ENCODE measurements at regions of chr5 and their contacts with region 1.

Region 1: DNA sequence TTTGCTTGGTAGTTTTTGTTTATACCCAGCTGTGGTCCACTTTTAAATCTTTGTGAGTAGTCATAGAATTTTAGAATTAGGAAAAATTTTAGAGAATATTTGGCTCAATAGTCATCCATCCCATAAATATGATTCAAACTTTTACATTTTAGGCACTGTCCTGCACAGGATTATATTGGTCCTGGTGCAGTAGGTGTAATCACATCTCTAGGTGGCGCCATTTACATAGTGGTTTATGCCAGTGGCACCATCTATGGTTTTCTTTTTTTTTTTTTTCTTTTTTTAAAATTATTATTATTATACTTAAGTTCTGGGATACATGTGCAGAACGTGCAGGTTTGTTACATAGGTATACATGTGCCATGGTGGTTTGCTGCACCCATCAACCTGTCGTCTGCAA is 260.7 kb upstream of the KCNN2 start:
- DNase-seq: peak in 1 of 2 donors; percentile 45
- ATAC-seq: peak in 2 of 8 donors; percentile 49 to 64
- H3K4me3 ChIP-seq: no peak overlapping the region
- H3K27ac ChIP-seq: no peak overlapping the region
- H3K4me1 ChIP-seq: no peaks in the 10 kb centered on the region
- H3K27me3 ChIP-seq: no peaks in the 10 kb centered on the region
- CTCF ChIP-seq: peak; percentile 28 to 77 (median 63)

Region 2: GRCh38 chr5:114223866-114224265 is 122.7 kb after region 1 on chr5:
- intact Hi-C with region 1: loop called in 2 of 10 experiments (anchors 5 to 10 kb)
- DNase-seq: no peak
- ATAC-seq: no peak
- H3K4me3 ChIP-seq: no peak overlapping the region
- H3K27ac ChIP-seq: no peak overlapping the region
- H3K4me1 ChIP-seq: no peaks in the 10 kb centered on the region
- H3K27me3 ChIP-seq: no peaks in the 10 kb centered on the region
- CTCF ChIP-seq: peak in 8 of 9 donors; percentile 22 to 54 (median 38)

Region 3: DNA sequence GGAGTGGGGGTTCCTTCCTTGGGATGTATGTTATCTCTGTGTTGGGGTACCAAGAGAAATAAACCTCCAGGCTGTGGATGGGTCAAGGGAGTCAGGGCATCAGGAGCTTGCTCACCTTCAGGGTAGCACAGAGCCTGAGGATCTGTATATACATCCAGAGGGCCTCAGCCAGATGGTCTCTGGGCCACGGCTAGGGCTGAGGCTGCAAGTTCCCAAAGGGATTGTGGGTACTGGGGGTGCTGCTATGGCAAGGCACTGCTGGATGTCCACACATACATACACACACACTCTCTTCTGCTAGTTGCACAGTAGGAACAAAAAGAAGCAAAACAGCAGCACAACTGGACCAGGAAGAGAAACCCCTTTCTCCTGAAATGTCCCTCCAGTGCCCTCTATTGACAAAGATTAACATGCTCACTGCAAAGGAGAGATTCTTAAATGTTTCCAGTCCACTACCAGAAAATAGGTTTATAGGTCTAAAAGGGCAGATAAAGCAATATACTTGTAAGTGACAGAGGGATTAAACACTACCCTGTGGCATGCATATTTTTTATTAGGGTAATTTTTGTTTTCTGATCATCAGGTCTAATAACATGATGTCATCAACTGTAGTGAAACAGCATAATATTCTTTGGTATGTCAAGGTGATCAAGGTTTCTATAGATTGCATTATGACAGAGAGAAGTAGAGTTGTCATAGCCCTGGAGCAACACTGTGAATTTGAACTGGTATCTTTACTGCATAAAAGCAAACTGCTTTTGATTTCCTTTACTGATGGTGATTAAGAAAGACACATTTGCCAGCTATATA is 204.5 kb after region 1 on chr5:
- intact Hi-C with region 1: loop called in 8 of 10 experiments (anchors 2 to 10 kb)
- DNase-seq: no peak
- ATAC-seq: peak in 2 of 8 donors; percentile 24 to 31
- H3K4me3 ChIP-seq: no peak overlapping the region
- H3K27ac ChIP-seq: no peak overlapping the region
- H3K4me1 ChIP-seq: no peaks in the 10 kb centered on the region
- H3K27me3 ChIP-seq: no peaks in the 10 kb centered on the region
- CTCF ChIP-seq: peak in 7 of 9 donors; percentile 47 to 69 (median 50)

Region 4: GRCh38 chr5:114361724-114362196 is 260.6 kb after region 1 on chr5 and contains the start of gene KCNN2:
- intact Hi-C with region 1: loop called in 1 of 10 experiments (anchors 10 kb)
- DNase-seq: peak; percentile 81 to 92
- ATAC-seq: peak; percentile 94 to 99 (median 98)
- H3K4me3 ChIP-seq: peak within 1 kb of the TSS; percentile 65 to 94 (median 82)
- H3K27ac ChIP-seq: peak within 1 kb of the TSS in 8 of 10 donors; percentile 54 to 84 (median 73)
- H3K4me1 ChIP-seq: peaks cover 7 to 35% (median 21%) of the 10 kb centered on the region in 9 donors
- H3K27me3 ChIP-seq: peaks cover 0 to 67% (median 27%) of the 10 kb centered on the region in 7 donors
- CTCF ChIP-seq: no peak
- total RNA-seq, gene KCNN2: 4.7 to 10.7 (median 7.6) TPM